ENCODE measurements at regions of chr1 and their contacts with region 1.

Region 1: DNA sequence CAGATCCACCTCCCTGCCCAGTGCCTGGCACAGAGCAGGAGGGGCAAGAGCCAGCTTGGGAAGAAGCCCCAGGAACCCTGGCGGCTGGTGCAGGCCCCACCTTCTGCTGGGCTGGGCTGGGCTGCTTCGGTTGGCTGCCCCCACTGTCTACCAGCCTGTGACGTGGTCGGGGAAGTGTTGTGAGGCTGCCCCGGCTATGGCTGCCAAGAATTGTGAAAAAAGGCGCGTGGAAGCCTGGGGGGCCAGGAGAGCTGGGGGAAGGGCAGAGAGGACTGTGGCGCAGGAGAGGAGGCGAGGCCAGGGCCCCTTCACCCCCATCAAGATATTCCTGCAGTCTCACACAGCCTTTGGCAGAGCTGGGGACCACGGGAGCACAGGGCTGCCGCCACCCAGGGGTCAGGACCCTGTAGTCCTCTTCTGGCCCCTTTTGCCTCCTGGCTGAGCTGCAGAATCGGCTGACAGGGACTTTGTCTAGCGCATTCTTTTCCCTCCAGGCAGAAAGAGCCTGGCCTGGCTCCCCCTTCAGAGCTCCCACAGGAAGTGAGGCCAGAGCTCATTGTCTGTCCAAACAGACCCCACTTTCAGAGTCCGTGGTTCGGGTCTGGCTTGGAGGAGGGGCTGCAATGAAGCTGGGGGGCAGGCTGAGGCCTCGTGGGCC is 4.3 kb downstream of the CELSR2 start:
- DNase-seq: no peak
- H3K4me3 ChIP-seq: no peak overlapping the region
- H3K27ac ChIP-seq: peak overlapping the region in 1 of 2 experiments; percentile 49
- H3K4me1 ChIP-seq: peaks cover 0 to 13% (median 9%) of the 10 kb centered on the region in 4 experiments
- H3K27me3 ChIP-seq: peaks cover 0 to 81% (median 22%) of the 10 kb centered on the region in 5 experiments

Region 2: DNA sequence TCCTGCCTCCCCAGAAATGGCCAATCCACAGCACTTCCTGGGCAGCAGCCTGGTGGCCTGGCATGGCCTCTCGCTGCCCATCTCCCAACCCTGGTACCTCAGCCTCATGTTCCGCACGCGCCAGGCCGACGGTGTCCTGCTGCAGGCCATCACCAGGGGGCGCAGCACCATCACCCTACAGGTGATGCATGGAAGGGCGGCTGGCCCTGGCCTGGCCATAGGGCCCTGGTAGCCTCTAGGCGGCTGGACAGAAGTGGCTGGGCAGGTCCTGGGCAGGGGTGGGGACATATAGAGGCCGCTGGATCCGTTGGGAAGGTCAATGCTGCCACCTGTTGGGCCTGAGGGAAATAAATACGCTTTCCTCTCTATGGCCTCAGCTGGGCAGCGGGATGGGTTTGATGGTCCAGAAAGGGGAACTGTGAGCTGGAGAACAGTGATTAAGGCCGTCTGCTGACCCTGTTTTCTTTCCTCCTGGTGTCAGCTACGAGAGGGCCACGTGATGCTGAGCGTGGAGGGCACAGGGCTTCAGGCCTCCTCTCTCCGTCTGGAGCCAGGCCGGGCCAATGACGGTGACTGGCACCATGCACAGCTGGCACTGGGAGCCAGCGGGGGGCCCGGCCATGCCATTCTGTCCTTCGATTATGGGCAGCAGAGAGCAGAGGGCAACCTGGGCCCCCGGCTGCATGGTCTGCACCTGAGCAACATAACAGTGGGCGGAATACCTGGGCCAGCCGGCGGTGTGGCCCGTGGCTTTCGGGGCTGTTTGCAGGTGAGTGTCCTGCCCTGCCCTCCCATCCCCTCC is 10.2 kb after region 1 on chr1:
- CTCF ChIA-PET with region 1: interaction called, 15 read pairs
- POLR2A ChIA-PET with region 1: no interaction called
- DNase-seq: peak; percentile 68 to 83 (median 79)
- H3K4me3 ChIP-seq: no peak overlapping the region
- H3K27ac ChIP-seq: no peak overlapping the region
- H3K4me1 ChIP-seq: no peaks in the 10 kb centered on the region
- H3K27me3 ChIP-seq: peaks cover 0 to 25% (median 2%) of the 10 kb centered on the region in 5 experiments

Region 3: GRCh38 chr1:109570417-109570827 is 316.8 kb after region 1 on chr1:
- CTCF ChIA-PET with region 1: no interaction called
- POLR2A ChIA-PET with region 1: no interaction called
- DNase-seq: no peak
- H3K4me3 ChIP-seq: no peak overlapping the region
- H3K27ac ChIP-seq: no peak overlapping the region
- H3K4me1 ChIP-seq: peaks cover 7 to 29% (median 20%) of the 10 kb centered on the region in 4 experiments
- H3K27me3 ChIP-seq: no peaks in the 10 kb centered on the region